ENCODE measurements at regions of chr10 and their contacts with region 1.

Region 1: GRCh38 chr10:31318854-31319601 is at the start of gene ZEB1:
- DNase-seq: peak; percentile 84 to 91
- ATAC-seq: peak; percentile 82 to 86 (median 82)
- H3K4me3 ChIP-seq: peak within 1 kb of the TSS; percentile 75
- H3K27ac ChIP-seq: peak within 1 kb of the TSS; percentile 97
- H3K4me1 ChIP-seq: peaks cover 32% of the 10 kb centered on the region
- H3K27me3 ChIP-seq: no peaks in the 10 kb centered on the region
- CTCF ChIP-seq: peak; percentile 54
- total RNA-seq, gene ZEB1: 92.0 to 99.8 (median 95.3) TPM

Region 2: DNA sequence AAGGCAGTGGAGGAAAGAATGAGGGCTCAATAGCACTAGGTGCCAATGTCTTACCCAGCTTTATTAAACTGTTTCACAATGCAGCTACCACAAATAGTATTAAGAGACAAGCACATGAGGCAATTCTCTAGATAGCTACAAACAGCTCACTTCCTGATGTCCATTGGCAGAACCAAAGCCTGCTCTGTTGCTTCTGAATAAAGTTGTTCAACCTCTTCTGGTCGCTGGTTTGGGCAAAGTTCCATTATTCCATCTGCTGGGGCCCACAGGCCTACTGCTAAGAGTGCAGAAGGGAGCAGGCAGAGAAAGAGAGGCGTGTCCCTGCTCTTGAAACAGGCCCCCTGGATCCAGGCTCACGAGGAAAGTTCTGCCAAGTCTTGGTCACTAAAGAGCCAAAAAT is 461.2 kb before region 1 on chr10:
- intact Hi-C with region 1: loop called in 1 of 2 experiments (anchors 10 kb)
- DNase-seq: peak; percentile 74 to 87
- ATAC-seq: peak; percentile 92 to 96 (median 94)
- H3K4me3 ChIP-seq: no peak overlapping the region
- H3K27ac ChIP-seq: peak overlapping the region; percentile 77
- H3K4me1 ChIP-seq: peaks cover 34% of the 10 kb centered on the region
- H3K27me3 ChIP-seq: no peaks in the 10 kb centered on the region
- CTCF ChIP-seq: no peak

Region 3: DNA sequence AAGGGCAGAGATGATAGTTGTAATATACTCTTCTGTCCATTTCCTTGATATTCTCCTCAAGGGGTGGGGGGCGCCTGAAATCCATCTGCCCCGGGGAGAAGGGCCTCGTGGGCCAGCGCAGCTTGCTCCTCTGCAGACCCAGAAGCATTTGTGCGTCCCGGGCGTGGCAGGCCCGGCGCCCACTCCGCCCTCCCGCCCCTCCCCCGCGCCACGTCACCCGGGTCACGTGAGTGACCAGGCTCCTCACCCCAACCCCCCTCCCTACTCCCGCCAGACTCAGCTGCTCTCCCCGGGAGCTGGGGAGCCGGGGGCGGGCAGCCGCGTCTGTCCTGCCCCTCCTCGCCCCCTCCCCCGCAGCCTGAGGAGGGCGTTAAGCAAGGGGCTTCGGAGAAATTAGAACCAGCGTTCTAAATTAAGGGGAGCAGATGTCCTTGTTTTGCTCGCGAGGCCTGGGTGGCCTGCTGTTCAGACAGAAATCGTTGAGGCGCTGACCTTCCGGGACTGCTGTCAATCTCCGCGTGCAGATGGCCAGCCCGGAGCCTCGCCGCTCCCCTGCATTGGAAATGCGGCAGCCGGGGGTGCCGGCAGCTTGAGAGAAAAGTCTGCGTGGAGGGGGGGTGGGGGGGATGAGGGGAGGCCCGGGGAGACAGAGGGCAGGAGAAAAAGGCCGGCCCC is 185.3 kb before region 1 on chr10:
- intact Hi-C with region 1: loop called in 1 of 2 experiments (anchors 10 kb)
- DNase-seq: peak; percentile 83 to 92
- ATAC-seq: peak; percentile 93 to 96 (median 94)
- H3K4me3 ChIP-seq: peak overlapping the region; percentile 70
- H3K27ac ChIP-seq: peak overlapping the region; percentile 95
- H3K4me1 ChIP-seq: peaks cover 10% of the 10 kb centered on the region
- H3K27me3 ChIP-seq: no peaks in the 10 kb centered on the region
- CTCF ChIP-seq: no peak

Region 4: DNA sequence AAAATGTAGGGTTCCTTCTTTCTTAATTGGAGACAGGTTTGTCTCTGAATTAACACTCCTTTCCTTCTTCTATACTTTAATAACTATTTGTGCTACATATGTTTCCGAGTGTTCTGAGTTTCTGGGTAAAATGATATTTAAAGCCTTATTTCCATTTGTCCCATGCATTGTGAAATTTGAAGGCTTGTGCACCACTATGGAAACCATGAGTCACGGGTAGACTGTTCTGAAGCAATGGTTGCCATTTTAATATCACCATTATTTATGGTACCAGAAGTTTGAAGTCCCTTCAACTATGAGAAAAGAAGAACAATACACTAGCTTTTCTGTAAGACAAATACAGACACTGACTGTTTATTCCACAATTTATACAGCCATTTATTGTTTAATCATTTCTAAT is 44.7 kb before region 1 on chr10:
- intact Hi-C with region 1: no loop called
- DNase-seq: no peak
- ATAC-seq: no peak
- H3K4me3 ChIP-seq: no peak overlapping the region
- H3K27ac ChIP-seq: no peak overlapping the region
- H3K4me1 ChIP-seq: no peaks in the 10 kb centered on the region
- H3K27me3 ChIP-seq: no peaks in the 10 kb centered on the region
- CTCF ChIP-seq: no peak

Region 5: DNA sequence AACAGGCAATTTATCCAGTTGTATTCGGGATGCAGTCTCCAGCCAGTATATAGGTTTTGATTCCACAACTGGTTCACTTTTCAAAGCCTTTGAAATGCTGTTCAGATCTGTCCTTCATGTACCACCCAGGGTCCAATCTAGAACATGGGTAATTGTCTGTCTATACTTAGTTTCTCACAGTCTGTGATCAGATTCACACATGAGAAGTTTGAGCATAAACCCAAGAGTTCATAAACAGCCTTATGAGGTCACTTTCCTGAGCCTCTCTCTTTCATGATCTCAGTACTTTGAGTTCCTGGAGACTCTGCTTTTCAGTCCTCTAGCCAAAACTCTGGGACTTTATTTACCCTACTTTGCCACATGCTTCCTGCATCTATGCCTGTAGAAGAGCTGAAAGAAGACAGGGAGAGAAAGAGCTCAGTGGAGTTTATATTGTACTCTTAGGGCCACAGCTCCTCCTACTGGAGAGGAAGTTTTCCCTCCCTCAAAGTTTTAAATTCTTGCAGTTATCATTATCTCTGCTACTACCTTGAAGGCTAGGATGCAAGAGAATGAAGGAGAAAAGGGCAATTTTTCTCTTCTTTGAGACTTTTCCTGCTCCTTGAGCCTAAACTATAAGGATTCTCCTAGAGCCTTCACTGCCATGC is 172.0 kb after region 1 on chr10:
- intact Hi-C with region 1: loop called in 1 of 2 experiments (anchors 5 kb)
- DNase-seq: no peak
- ATAC-seq: peak; percentile 57 to 88 (median 69)
- H3K4me3 ChIP-seq: no peak overlapping the region
- H3K27ac ChIP-seq: no peak overlapping the region
- H3K4me1 ChIP-seq: no peaks in the 10 kb centered on the region
- H3K27me3 ChIP-seq: no peaks in the 10 kb centered on the region
- CTCF ChIP-seq: peak; percentile 68

Region 6: GRCh38 chr10:31808258-31809218 is 489.5 kb after region 1 on chr10:
- intact Hi-C with region 1: loop called in 1 of 2 experiments (anchors 10 kb)
- DNase-seq: peak; percentile 23 to 61
- ATAC-seq: peak; percentile 86 to 93 (median 92)
- H3K4me3 ChIP-seq: peak overlapping the region; percentile 62
- H3K27ac ChIP-seq: peak overlapping the region; percentile 76
- H3K4me1 ChIP-seq: no peaks in the 10 kb centered on the region
- H3K27me3 ChIP-seq: no peaks in the 10 kb centered on the region
- CTCF ChIP-seq: peak; percentile 70